ENCODE measurements at regions of chr12 and their contacts with region 1.

Region 1: GRCh38 chr12:49842519-49843352 is at the start of gene BCDIN3D:
- DNase-seq: peak; percentile 94
- H3K4me3 Mint-ChIP-seq: peak within 1 kb of the TSS; percentile 81
- H3K27ac Mint-ChIP-seq: peak within 1 kb of the TSS; percentile 92
- H3K4me1 Mint-ChIP-seq: peaks cover 16% of the 10 kb centered on the region
- H3K27me3 Mint-ChIP-seq: no peaks in the 10 kb centered on the region
- CTCF ChIP-seq: no peak
- total RNA-seq, gene BCDIN3D: 6.2 and 8.2 TPM in 2 replicates

Region 2: DNA sequence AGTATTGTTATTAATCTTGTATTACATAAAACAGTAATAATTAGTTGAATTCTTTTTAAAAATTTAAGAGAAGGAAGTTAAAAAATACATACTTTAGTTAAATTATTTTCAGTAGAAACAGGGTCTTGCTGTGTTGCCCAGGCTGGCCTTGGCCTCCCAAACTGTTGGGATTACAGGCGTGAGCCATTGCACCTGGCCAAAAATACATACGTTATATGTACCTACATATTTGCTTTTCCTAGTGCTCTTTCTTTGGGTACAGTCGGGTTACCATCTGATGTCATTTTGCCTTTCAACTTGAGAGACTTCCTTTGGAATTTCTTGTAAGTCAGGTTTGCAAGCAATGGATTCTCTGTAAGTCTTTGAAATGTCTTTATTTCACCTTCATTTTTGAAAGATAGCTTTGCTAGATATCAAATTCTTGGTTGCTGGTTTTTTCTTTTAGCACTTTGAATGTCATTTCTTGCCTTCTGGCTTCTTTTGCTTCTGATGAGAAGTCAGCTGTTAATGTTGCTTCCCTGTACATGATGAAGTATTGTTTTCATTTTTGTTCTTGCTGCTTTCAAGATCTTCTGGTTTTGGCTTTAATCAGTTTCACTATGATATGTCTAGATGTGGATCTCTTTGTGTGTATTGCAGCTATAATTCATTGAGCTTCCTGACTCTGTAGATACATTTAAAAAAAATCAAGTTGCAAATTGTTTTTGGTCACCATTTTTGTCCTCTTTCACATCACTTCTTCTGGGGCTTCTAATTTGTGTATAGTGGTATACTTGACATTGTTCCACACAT is 391.1 kb before region 1 on chr12:
- CTCF ChIA-PET with region 1: no interaction called
- POLR2A ChIA-PET with region 1: no interaction called
- intact Hi-C with region 1: no loop called
- DNase-seq: no peak
- H3K4me3 Mint-ChIP-seq: no peak overlapping the region
- H3K27ac Mint-ChIP-seq: no peak overlapping the region
- H3K4me1 Mint-ChIP-seq: no peaks in the 10 kb centered on the region
- H3K27me3 Mint-ChIP-seq: no peaks in the 10 kb centered on the region
- CTCF ChIP-seq: no peak

Region 3: DNA sequence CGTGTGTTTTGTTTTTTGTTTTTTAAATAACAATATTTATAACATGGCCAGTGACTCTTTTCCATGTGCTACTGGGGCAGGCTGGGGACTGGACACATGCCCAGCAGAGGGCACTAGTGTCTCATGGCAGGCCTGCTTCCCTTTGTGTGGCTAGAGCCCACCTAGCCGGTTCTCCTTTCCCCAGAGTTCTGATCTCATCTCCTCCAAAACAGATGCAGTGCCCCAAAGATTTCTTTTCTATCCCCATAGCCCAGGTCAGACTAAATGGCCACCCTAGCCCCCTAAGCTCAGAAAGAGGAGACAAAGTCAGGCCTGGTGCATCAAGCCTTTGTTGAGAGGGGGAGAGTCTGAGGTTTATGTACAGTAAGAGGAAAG is 198.1 kb before region 1 on chr12:
- CTCF ChIA-PET with region 1: interaction called, 3 read pairs
- POLR2A ChIA-PET with region 1: no interaction called
- intact Hi-C with region 1: loop called (anchors 2 kb)
- DNase-seq: peak; percentile 71
- H3K4me3 Mint-ChIP-seq: no peak overlapping the region
- H3K27ac Mint-ChIP-seq: no peak overlapping the region
- H3K4me1 Mint-ChIP-seq: peaks cover 13% of the 10 kb centered on the region
- H3K27me3 Mint-ChIP-seq: no peaks in the 10 kb centered on the region
- CTCF ChIP-seq: peak; percentile 82

Region 4: GRCh38 chr12:49740930-49741881 is 101.5 kb before region 1 on chr12 and contains the start of gene TMBIM6:
- CTCF ChIA-PET with region 1: interaction called, 4 read pairs
- POLR2A ChIA-PET with region 1: interaction called, 26 read pairs
- intact Hi-C with region 1: no loop called
- DNase-seq: peak; percentile 100
- H3K4me3 Mint-ChIP-seq: peak within 1 kb of the TSS; percentile 88
- H3K27ac Mint-ChIP-seq: peak within 1 kb of the TSS; percentile 99
- H3K4me1 Mint-ChIP-seq: peaks cover 10% of the 10 kb centered on the region
- H3K27me3 Mint-ChIP-seq: no peaks in the 10 kb centered on the region
- CTCF ChIP-seq: peak; percentile 79
- total RNA-seq, gene TMBIM6: 517 and 606 TPM in 2 replicates

Region 5: DNA sequence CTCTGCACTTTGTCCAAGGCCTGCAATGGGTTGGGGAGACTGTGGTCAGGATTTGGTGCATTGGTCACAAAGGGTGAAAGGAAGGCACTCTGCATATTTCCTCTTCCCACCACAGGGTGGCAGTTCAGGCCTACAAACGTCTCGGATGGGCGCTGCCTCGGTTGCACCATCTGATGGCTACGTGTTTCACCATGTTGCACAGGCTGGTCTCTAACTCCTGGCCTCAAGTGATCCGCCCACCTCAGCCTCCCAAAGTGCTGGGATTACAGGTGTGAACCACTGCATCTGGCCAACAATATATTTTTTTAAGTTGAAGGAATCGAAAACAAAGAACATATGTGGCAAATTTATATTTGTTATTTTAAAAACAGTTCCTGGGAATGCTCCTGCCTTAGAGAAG is 66.3 kb before region 1 on chr12:
- CTCF ChIA-PET with region 1: interaction called, 57 read pairs
- POLR2A ChIA-PET with region 1: interaction called, 10 read pairs
- intact Hi-C with region 1: loop called (anchors 1 kb)
- DNase-seq: peak; percentile 82
- H3K4me3 Mint-ChIP-seq: no peak overlapping the region
- H3K27ac Mint-ChIP-seq: peak overlapping the region; percentile 42
- H3K4me1 Mint-ChIP-seq: peaks cover 17% of the 10 kb centered on the region
- H3K27me3 Mint-ChIP-seq: peaks cover 20% of the 10 kb centered on the region
- CTCF ChIP-seq: peak; percentile 92

Region 6: DNA sequence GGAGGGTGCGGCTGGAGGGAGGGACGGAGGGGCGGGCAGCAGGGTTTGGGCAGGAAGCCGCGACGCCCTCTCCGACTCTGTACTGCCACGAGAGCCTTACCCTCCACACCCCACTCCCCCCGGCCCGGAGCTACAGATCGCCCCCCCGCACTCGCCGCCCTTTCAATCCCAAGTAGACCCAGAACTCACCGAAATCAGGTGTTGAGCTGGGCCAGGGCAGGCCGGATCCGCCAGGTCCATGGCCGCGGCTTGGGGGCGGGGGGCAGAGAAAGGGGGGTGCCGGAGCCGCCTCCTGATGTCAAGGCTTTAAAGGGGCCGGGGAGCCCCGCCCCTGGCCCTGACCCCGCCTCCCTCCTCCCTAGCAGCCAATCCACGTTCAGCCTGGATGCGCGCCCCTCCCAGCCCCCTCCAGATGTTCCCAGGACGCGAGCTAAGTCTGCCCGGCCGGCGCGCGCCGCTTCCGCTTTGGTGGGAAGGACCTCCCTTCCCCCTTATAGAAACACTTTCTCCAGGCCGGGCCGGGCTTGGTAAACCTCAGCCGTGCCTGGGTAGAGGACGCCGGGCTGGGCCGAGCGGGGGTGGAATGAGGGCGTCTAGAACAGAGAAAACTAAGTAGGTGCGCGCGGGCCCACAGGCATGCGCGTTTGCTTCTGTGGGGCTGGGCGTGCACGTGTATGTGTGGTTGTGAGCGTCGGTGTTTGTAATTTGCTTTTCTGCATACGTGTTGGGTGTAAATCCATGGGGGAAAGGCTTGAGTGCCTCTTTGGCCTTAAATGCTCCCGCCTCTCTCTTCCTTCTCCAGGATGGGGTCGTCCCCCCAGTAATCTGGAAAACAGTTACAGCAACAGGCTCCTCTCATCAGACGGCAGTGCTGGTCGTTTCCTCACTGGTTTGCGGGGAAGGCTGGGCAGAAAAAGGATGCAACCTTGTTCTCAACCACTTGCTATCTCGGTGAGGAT is 14.3 kb before region 1 on chr12 and contains the start of gene NCKAP5L:
- CTCF ChIA-PET with region 1: interaction called, 17 read pairs
- POLR2A ChIA-PET with region 1: interaction called, 67 read pairs
- intact Hi-C with region 1: no loop called
- DNase-seq: peak; percentile 96
- H3K4me3 Mint-ChIP-seq: peak within 1 kb of the TSS; percentile 81
- H3K27ac Mint-ChIP-seq: peak within 1 kb of the TSS; percentile 75
- H3K4me1 Mint-ChIP-seq: peaks cover 32% of the 10 kb centered on the region
- H3K27me3 Mint-ChIP-seq: no peaks in the 10 kb centered on the region
- CTCF ChIP-seq: no peak
- total RNA-seq, gene NCKAP5L: 19.9 and 23.1 TPM in 2 replicates

Region 7: DNA sequence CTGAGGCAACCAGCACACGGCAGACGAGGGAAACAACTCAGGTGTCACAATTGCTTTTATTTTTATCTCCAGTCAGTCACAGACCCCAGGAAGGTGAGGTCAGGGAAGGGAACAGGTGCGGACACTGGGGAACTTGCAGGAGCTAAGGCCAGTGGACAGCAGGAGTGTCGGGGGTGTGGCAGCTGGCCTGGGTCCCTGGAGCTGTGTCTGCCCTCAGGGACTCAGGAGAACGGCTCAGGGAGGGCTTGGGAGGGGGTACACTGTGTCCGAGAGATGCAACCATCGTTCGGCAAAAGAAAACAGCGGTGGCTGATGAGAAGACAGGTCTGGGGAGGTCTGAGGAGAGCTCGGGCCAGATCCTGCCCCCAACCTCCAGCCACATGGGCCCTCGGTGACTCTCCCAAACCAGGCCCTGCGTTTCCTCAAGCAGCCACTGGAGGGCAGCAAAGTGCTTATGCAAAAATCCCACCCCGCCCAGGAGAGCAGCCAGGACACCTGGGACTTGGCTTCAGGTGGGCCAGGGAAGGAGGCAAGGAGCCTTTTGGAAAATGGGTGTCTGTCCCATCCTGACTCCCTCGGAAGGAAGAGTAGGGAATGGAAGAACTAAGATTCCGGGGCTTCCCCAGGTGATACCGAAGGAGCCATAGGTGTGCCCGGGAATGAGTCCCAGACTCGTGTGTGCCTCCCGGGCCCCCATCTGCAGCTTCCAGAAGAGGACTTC is 24.3 kb after region 1 on chr12:
- CTCF ChIA-PET with region 1: interaction called, 11 read pairs
- POLR2A ChIA-PET with region 1: interaction called, 11 read pairs
- intact Hi-C with region 1: no loop called
- DNase-seq: peak; percentile 77
- H3K4me3 Mint-ChIP-seq: no peak overlapping the region
- H3K27ac Mint-ChIP-seq: no peak overlapping the region
- H3K4me1 Mint-ChIP-seq: peaks cover 10% of the 10 kb centered on the region
- H3K27me3 Mint-ChIP-seq: peaks cover 14% of the 10 kb centered on the region
- CTCF ChIP-seq: peak; percentile 95

Region 8: GRCh38 chr12:49920241-49920921 is 77.6 kb after region 1 on chr12:
- CTCF ChIA-PET with region 1: no interaction called
- POLR2A ChIA-PET with region 1: no interaction called
- intact Hi-C with region 1: no loop called
- DNase-seq: peak; percentile 52
- H3K4me3 Mint-ChIP-seq: no peak overlapping the region
- H3K27ac Mint-ChIP-seq: no peak overlapping the region
- H3K4me1 Mint-ChIP-seq: peaks cover 7% of the 10 kb centered on the region
- H3K27me3 Mint-ChIP-seq: no peaks in the 10 kb centered on the region
- CTCF ChIP-seq: no peak

Region 9: GRCh38 chr12:49933796-49934195 is 91.1 kb after region 1 on chr12:
- CTCF ChIA-PET with region 1: no interaction called
- POLR2A ChIA-PET with region 1: no interaction called
- intact Hi-C with region 1: no loop called
- DNase-seq: peak; percentile 6
- H3K4me3 Mint-ChIP-seq: no peak overlapping the region
- H3K27ac Mint-ChIP-seq: no peak overlapping the region
- H3K4me1 Mint-ChIP-seq: peaks cover 6% of the 10 kb centered on the region
- H3K27me3 Mint-ChIP-seq: no peaks in the 10 kb centered on the region
- CTCF ChIP-seq: no peak